ENCODE measurements at regions of chrX and their contacts with region 1.

Region 1: DNA sequence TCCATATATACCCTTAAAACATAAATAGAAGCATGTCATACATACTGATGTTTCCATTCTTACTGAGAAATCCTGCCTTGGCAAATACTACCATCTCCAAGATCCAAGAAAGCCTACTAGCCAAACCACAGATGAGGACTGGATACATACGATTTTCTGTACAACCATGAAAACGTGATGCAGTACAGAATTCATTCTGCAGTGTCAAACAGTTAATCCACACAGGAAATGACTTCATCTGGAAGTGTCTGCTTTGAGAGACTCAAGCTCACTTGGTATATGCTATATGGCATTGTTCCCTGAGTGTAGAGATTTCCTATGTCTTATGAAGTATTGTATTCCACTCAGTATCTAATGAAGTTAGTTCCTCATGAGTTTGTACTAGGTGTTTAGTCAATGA is 94.3 kb downstream of the CT47B1 start:
- DNase-seq: no peak
- H3K4me3 ChIP-seq: no peak overlapping the region
- H3K27ac ChIP-seq: no peak overlapping the region
- H3K4me1 ChIP-seq: no peaks in the 10 kb centered on the region
- CTCF ChIP-seq: no peak

Region 2: GRCh38 chrX:120310861-120311726 is 470.3 kb before region 1 on chrX and contains the start of gene TMEM255A:
- CTCF ChIA-PET with region 1: no interaction called
- POLR2A ChIA-PET with region 1: no interaction called
- intact Hi-C with region 1: loop called (anchors 10 kb)
- DNase-seq: no peak
- H3K4me3 ChIP-seq: no peak within 1 kb of the TSS
- H3K27ac ChIP-seq: no peak within 1 kb of the TSS
- H3K4me1 ChIP-seq: no peaks in the 10 kb centered on the region
- CTCF ChIP-seq: no peak
- total RNA-seq, gene TMEM255A: not detected in 2 replicates

Region 3: DNA sequence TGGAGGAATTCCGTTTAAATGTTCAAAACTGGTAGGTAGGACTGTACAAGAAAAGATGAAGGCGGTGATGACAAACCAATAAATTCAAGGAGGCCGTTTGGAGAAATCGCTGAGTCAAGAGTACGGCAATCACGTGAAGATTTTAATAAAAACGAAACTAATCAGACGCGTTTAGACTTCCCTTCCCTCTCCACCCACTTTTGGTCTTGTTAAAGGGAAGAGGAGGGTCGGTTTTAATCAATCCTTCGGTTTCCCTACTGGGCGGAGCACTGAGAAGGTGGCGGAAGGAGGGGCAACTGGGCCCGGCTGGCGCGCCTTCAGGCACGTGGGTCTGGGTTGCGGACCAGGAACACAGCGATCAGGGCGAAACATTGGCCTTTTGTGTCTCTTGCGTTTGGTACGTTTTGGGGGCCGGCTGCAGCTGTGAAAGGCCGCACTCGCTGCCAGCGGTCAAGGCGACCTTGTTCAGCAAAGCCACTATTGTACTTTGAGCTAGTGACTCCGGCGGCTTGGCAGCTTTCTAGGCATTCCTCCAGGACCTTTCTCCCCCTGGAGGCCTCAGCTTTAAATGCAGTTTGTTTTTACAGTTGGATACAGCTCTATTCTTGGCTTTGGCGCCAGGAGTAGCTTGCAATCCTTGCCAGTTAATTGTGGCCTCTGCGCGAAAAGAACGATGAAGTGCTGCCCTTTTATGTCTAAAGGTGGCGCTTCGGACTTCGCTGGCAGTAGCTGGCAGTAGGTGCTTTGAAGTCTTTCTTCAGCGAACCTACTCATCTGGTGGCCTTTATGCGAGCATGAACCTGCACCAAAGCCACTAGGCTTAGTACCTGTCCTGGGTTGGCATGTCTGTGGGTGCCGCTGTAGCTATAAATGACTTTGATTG is 295.5 kb before region 1 on chrX:
- CTCF ChIA-PET with region 1: no interaction called
- POLR2A ChIA-PET with region 1: no interaction called
- intact Hi-C with region 1: no loop called
- DNase-seq: peak; percentile 52
- H3K4me3 ChIP-seq: no peak overlapping the region
- H3K27ac ChIP-seq: no peak overlapping the region
- H3K4me1 ChIP-seq: peaks cover 7% of the 10 kb centered on the region
- CTCF ChIP-seq: peak; percentile 69

Region 4: GRCh38 chrX:121014591-121015225 is 233.3 kb after region 1 on chrX:
- CTCF ChIA-PET with region 1: no interaction called
- POLR2A ChIA-PET with region 1: no interaction called
- intact Hi-C with region 1: no loop called
- DNase-seq: no peak
- H3K4me3 ChIP-seq: no peak overlapping the region
- H3K27ac ChIP-seq: no peak overlapping the region
- H3K4me1 ChIP-seq: no peaks in the 10 kb centered on the region
- CTCF ChIP-seq: no peak

Measured in OCI-LY7 (cell line).